MCF 10A (cell line): ENCODE measurements at regions of chr1 and their contacts with region 1.

Region 1: GRCh38 chr1:39609618-39610331 is 29.7 kb downstream of the HEYL start:
- DNase-seq: peak; percentile 22
- H3K4me3 Mint-ChIP-seq: no peak overlapping the region
- H3K27ac Mint-ChIP-seq: no peak overlapping the region
- H3K4me1 Mint-ChIP-seq: no peaks in the 10 kb centered on the region
- H3K27me3 Mint-ChIP-seq: no peaks in the 10 kb centered on the region
- CTCF ChIP-seq: peak; percentile 28

Region 2: GRCh38 chr1:39575191-39576015 is 34.4 kb before region 1 on chr1:
- CTCF ChIA-PET with region 1: interaction called, 14 read pairs
- POLR2A ChIA-PET with region 1: interaction called, 8 read pairs
- intact Hi-C with region 1: no loop called
- DNase-seq: peak; percentile 42
- H3K4me3 Mint-ChIP-seq: peak overlapping the region; percentile 88
- H3K27ac Mint-ChIP-seq: peak overlapping the region; percentile 88
- H3K4me1 Mint-ChIP-seq: peaks cover 16% of the 10 kb centered on the region
- H3K27me3 Mint-ChIP-seq: no peaks in the 10 kb centered on the region
- CTCF ChIP-seq: no peak

Region 3: GRCh38 chr1:39590551-39590950 is 19.2 kb before region 1 on chr1:
- CTCF ChIA-PET with region 1: interaction called, 11 read pairs
- POLR2A ChIA-PET with region 1: interaction called, 3 read pairs
- intact Hi-C with region 1: no loop called
- DNase-seq: peak; percentile 50
- H3K4me3 Mint-ChIP-seq: no peak overlapping the region
- H3K27ac Mint-ChIP-seq: no peak overlapping the region
- H3K4me1 Mint-ChIP-seq: no peaks in the 10 kb centered on the region
- H3K27me3 Mint-ChIP-seq: peaks cover 19% of the 10 kb centered on the region
- CTCF ChIP-seq: no peak

Region 4: GRCh38 chr1:39646232-39647081 is 36.7 kb after region 1 on chr1:
- CTCF ChIA-PET with region 1: interaction called, 30 read pairs
- POLR2A ChIA-PET with region 1: interaction called, 3 read pairs
- intact Hi-C with region 1: no loop called
- DNase-seq: no peak
- H3K4me3 Mint-ChIP-seq: no peak overlapping the region
- H3K27ac Mint-ChIP-seq: no peak overlapping the region
- H3K4me1 Mint-ChIP-seq: no peaks in the 10 kb centered on the region
- H3K27me3 Mint-ChIP-seq: no peaks in the 10 kb centered on the region
- CTCF ChIP-seq: no peak

Region 5: GRCh38 chr1:39653546-39654031 is 43.8 kb after region 1 on chr1:
- CTCF ChIA-PET with region 1: interaction called, 30 read pairs
- POLR2A ChIA-PET with region 1: interaction called, 5 read pairs
- intact Hi-C with region 1: loop called (anchors 1 kb)
- DNase-seq: peak; percentile 82
- H3K4me3 Mint-ChIP-seq: no peak overlapping the region
- H3K27ac Mint-ChIP-seq: peak overlapping the region; percentile 71
- H3K4me1 Mint-ChIP-seq: peaks cover 10% of the 10 kb centered on the region
- H3K27me3 Mint-ChIP-seq: no peaks in the 10 kb centered on the region
- CTCF ChIP-seq: peak; percentile 86

Region 6: DNA sequence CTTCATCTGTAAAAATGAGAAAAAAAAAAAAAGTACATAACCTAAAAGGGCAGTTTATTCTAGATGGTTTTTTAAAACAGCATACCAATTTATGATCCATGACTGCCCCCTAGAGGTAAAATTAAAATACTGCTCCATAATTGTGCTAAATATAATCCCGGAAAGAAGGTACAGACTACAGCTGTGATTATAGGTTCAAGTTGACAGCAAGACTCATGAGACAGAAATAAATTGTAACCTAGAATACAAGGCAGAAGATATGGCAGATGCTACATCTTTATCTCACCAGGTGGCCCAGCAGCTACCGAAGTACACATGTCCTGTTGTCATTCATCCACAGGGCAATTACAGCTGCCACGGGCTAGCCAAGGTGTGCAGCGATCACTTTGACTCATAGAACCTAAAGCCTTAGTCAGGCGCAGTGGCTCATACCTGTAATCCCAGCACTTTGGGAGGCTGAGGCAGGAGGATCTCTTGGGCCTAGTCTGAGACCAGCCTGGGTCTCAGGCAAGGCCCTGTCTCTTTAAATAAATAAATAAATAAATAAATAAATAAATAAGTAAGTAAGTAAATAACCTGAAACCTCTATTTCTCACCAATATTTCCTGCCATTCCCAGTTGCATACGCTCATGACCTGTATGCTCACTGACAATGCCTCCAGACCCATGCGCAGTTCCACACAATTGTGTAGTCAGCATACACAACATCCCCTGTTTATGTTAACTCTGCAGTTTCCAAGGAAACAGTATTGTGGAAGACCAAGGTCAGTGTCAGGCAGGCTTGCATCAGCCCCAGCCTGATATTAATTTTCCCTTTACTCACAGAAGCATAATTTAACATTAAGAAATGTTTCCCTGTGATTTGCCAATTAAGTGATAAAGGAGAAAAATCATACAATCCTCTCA is 110.6 kb after region 1 on chr1:
- CTCF ChIA-PET with region 1: interaction called, 23 read pairs
- POLR2A ChIA-PET with region 1: interaction called, 10 read pairs
- intact Hi-C with region 1: loop called (anchors 1 kb)
- DNase-seq: peak; percentile 76
- H3K4me3 Mint-ChIP-seq: no peak overlapping the region
- H3K27ac Mint-ChIP-seq: no peak overlapping the region
- H3K4me1 Mint-ChIP-seq: no peaks in the 10 kb centered on the region
- H3K27me3 Mint-ChIP-seq: peaks cover 39% of the 10 kb centered on the region
- CTCF ChIP-seq: peak; percentile 50

Region 7: DNA sequence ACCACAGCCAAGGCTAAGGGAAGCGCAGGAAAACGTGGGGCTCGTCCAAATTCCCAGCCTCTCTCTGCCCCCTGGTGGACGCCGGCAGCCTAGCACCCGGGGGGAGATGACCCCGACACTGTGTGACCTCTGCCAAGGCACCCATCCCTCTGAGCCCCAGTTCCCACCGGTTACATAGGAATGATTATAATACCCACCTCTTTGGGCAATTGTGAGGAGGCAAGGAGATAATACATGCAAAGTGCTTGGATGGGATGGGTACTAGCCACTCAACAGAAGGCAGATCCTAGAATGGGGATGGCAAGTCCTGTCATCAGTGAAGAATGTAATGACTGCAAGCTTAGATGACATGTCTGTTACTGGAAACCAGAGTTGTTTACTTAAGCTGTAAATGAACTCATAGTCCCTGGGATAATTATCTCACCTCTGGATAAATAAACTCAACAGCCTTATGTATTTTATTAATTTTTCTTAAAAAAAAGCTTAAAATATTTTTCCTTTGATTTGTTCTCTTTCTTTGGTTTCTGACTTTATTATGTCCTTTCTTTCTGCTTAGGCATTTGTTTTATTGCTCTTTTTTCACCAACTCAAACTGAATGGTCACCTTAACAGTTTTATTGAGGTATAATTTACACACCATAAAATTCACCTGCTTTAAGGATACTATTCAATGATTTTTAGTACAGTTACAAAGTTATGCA is 190.1 kb after region 1 on chr1:
- CTCF ChIA-PET with region 1: interaction called, 5 read pairs
- POLR2A ChIA-PET with region 1: interaction called, 4 read pairs
- intact Hi-C with region 1: loop called (anchors 1 kb)
- DNase-seq: peak; percentile 82
- H3K4me3 Mint-ChIP-seq: peak overlapping the region; percentile 19
- H3K27ac Mint-ChIP-seq: peak overlapping the region; percentile 78
- H3K4me1 Mint-ChIP-seq: peaks cover 26% of the 10 kb centered on the region
- H3K27me3 Mint-ChIP-seq: no peaks in the 10 kb centered on the region
- CTCF ChIP-seq: peak; percentile 96